Activated T-helper 2 cell treated with anti-CD3 and anti-CD28 coated beads, Interferon-gamma antibody, Interleukin-2, Interleukin-4, amounts not matched to agents 10 μg/mL and 5 μg/mL and 100 μg/mL, durations not matched to agents 14 hours and 24 hours and 36 hours (primary cell): ENCODE measurements at regions of chr6 and their contacts with region 1.

Region 1: DNA sequence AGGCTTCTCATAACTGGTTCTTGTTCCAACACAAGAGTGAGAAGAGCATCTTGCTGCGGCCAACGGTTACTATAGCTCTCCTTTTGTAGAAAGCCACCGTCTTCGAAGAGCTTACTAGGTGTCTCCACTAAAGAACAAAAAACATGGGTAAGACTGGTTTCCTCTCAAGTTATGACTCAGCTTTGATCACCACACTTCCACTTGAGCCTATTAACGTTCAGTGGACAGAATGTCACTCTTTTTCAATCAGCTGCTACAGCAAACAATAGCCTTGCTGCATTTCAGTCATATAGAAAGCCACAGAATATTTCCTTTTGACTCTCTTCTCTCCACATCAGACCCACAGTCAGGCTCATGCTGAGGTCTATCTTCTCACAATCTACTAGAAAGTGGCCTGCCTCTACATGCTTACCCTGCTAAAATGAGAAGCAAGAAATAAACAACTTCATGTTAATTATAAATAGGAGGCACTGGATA is 243.5 kb upstream of the PREP start:
- DNase-seq: peak; percentile 66
- H3K4me3 Mint-ChIP-seq: peak overlapping the region; percentile 22
- H3K27ac Mint-ChIP-seq: peak overlapping the region; percentile 84
- H3K4me1 Mint-ChIP-seq: peaks cover 81% of the 10 kb centered on the region
- H3K27me3 Mint-ChIP-seq: no peaks in the 10 kb centered on the region

Region 2: DNA sequence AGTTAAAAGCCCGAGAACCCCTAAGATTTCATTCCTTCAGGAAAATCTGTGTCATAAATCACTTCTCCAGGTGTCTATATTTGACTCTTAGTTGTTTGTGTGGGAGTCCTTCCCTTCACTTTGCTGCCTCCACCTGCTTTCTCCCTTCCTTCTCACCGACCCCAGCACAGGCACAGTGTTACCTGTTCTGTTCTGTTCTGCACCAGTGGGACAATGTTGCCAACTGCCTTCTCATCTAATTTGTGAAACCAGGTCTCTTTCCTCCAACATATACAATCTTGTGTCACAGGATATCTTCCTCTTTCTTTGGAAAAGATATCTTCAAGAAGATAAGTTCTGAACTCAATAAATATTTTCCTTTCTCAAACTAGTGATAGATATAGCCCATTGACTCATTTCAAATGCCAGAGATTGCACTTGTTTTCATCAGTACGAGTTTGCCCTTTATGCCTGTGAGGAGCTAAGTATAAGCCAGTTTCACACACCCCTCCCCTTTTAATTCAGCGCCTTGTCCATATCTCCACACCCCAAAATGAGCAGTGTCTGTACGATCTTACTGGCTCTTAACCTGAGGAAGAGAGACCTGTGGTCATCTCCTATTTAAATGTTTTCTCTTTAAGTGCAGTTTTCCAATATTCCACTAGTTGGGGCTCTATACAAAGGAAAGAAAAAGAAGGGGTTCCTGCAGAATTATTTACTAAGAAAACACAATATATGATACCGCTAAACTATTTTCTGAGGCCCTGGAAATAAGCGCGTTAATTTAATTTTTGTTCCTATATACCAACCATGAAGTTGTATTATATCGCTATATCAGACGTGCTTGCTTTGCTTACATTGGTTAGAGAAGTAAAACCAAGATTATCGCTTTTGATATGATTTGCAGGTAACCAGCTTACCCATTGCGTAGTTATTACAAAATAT is 161.9 kb before region 1 on chr6:
- intact Hi-C with region 1: loop called (anchors 1 kb)
- DNase-seq: no peak
- H3K4me3 Mint-ChIP-seq: peak overlapping the region; percentile 14
- H3K27ac Mint-ChIP-seq: peak overlapping the region; percentile 58
- H3K4me1 Mint-ChIP-seq: peaks cover 58% of the 10 kb centered on the region
- H3K27me3 Mint-ChIP-seq: no peaks in the 10 kb centered on the region

Region 3: GRCh38 chr6:105620878-105621277 is 25.6 kb before region 1 on chr6:
- intact Hi-C with region 1: loop called (anchors 1 kb)
- DNase-seq: no peak
- H3K4me3 Mint-ChIP-seq: no peak overlapping the region
- H3K27ac Mint-ChIP-seq: peak overlapping the region; percentile 85
- H3K4me1 Mint-ChIP-seq: peaks cover 40% of the 10 kb centered on the region
- H3K27me3 Mint-ChIP-seq: peaks cover 2% of the 10 kb centered on the region

Region 4: DNA sequence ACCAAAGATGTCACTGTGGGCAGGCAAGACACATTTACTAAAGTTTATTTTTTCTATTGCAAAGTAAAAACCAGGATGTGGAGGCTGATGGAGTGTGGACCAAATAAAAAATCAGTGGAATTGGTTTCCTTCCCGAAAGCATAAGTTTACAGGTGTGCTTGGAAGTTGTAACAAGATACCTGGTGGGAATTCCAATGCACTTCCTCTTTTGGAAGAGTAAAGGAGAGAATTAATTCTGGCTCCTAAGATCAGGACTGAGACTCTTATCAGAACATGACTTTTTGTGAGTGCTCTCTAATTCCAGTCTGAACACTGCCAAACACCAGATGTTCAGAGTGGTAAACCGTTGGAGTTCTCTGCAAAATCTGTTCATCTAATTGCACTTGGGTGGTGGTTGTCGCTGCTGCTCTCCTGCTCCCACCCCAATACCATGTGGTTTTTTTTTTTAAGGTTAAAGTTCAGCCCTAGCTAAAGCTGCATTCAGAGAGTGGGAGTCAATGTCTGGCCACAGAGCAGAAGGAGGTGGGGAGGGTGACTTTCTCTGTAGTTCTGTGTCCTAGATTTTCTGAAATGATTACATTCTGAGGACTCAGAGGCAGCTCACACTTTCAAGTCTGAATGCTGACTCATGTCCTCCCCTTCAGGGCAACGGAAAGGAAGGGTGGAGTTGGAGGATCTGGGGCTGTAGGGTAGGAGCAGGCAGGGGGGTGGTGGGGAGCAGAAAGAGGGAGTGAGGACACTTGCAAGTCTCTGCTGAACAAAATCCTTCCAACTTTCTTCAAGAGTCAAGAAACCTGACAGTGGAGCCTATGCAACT is 163.9 kb after region 1 on chr6:
- intact Hi-C with region 1: loop called (anchors 2 kb)
- DNase-seq: peak; percentile 70
- H3K4me3 Mint-ChIP-seq: peak overlapping the region; percentile 39
- H3K27ac Mint-ChIP-seq: peak overlapping the region; percentile 78
- H3K4me1 Mint-ChIP-seq: peaks cover 64% of the 10 kb centered on the region
- H3K27me3 Mint-ChIP-seq: no peaks in the 10 kb centered on the region

Region 5: GRCh38 chr6:106097411-106098231 is 451.2 kb after region 1 on chr6:
- intact Hi-C with region 1: loop called (anchors 1 kb)
- DNase-seq: peak; percentile 61
- H3K4me3 Mint-ChIP-seq: peak overlapping the region; percentile 95
- H3K27ac Mint-ChIP-seq: peak overlapping the region; percentile 98
- H3K4me1 Mint-ChIP-seq: peaks cover 69% of the 10 kb centered on the region
- H3K27me3 Mint-ChIP-seq: no peaks in the 10 kb centered on the region

Region 6: GRCh38 chr6:106519460-106520394 is 873.3 kb after region 1 on chr6:
- intact Hi-C with region 1: loop called (anchors 1 kb)
- DNase-seq: peak; percentile 79
- H3K4me3 Mint-ChIP-seq: peak overlapping the region; percentile 90
- H3K27ac Mint-ChIP-seq: peak overlapping the region; percentile 97
- H3K4me1 Mint-ChIP-seq: peaks cover 57% of the 10 kb centered on the region
- H3K27me3 Mint-ChIP-seq: no peaks in the 10 kb centered on the region